PC-9 (cell line): ENCODE measurements at regions of chr5 and their contacts with region 1.

Region 1: GRCh38 chr5:132466433-132467286 is 23.9 kb downstream of the IRF1 start:
- DNase-seq: peak in 1 of 2 experiments; percentile 59
- H3K4me3 ChIP-seq: no peak overlapping the region
- H3K27ac ChIP-seq: no peak overlapping the region
- H3K4me1 ChIP-seq: peaks cover 29% of the 10 kb centered on the region
- H3K27me3 ChIP-seq: no peaks in the 10 kb centered on the region
- CTCF ChIP-seq: no peak

Region 2: GRCh38 chr5:132446669-132447068 is 20.0 kb before region 1 on chr5:
- CTCF ChIA-PET with region 1: interaction called, 8 read pairs
- POLR2A ChIA-PET with region 1: interaction called, 8 read pairs
- intact Hi-C with region 1: loop called (anchors 1 kb)
- DNase-seq: peak; percentile 62 to 73
- H3K4me3 ChIP-seq: no peak overlapping the region
- H3K27ac ChIP-seq: peak overlapping the region; percentile 88
- H3K4me1 ChIP-seq: peaks cover 55% of the 10 kb centered on the region
- H3K27me3 ChIP-seq: no peaks in the 10 kb centered on the region
- CTCF ChIP-seq: no peak